ENCODE measurements at regions of chr7 and their contacts with region 1.

Region 1: DNA sequence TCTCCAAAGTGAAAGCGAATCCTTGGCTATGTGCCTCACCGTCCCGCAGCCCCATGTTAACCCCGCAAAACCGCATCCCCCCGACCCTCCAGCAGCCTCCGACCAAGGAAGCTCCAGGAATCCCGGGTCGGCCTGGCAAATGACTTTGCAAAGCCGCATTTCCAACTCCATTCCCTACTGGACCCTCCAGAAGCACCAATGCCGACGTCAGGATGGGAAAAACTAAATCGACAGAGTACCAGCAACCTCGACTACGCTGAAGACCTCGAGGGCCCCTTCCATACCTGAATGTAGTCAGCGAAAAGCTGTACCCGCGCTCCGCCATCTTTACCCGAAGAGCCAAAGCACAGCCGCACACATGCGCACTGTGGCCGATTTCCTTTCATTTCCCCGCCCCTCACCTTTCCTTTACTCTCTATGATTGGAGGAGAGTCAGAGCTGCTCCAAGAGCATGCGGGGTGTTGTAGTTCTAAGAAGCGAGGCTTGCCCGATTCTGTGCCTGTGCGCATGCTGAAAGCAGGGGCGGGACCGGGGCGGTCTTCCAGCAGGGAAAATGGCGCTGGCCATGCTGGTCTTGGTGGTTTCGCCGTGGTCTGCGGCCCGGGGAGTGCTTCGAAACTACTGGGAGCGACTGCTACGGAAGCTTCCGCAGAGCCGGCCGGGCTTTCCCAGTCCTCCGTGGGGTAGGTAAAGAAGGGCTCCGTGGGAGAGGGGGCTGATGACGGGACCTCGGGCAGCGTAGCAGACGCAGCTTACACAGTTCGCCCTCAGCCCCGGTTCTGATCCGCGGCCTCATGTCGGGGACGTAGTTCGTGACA is at the starts of genes MRPL32 and PSMA2:
- DNase-seq: peak; percentile 97
- H3K4me3 Mint-ChIP-seq: peak within 1 kb of the TSS; percentile 99
- H3K27ac Mint-ChIP-seq: peak within 1 kb of the TSS; percentile 91
- H3K4me1 Mint-ChIP-seq: peaks cover 69% of the 10 kb centered on the region
- H3K27me3 Mint-ChIP-seq: no peaks in the 10 kb centered on the region
- total RNA-seq, gene MRPL32: 81.5 and 82.0 TPM in 2 replicates
- total RNA-seq, gene PSMA2: 187 and 194 TPM in 2 replicates

Region 2: GRCh38 chr7:42869131-42870020 is 62.7 kb before region 1 on chr7:
- intact Hi-C with region 1: loop called (anchors 1 kb)
- DNase-seq: peak; percentile 19
- H3K4me3 Mint-ChIP-seq: peak overlapping the region; percentile 19
- H3K27ac Mint-ChIP-seq: peak overlapping the region; percentile 88
- H3K4me1 Mint-ChIP-seq: peaks cover 24% of the 10 kb centered on the region
- H3K27me3 Mint-ChIP-seq: peaks cover 2% of the 10 kb centered on the region

Region 3: GRCh38 chr7:42911454-42912447 is 20.3 kb before region 1 on chr7 and contains the start of gene C7orf25:
- intact Hi-C with region 1: loop called (anchors 1 kb)
- DNase-seq: peak; percentile 93
- H3K4me3 Mint-ChIP-seq: peak within 1 kb of the TSS; percentile 90
- H3K27ac Mint-ChIP-seq: peak within 1 kb of the TSS; percentile 80
- H3K4me1 Mint-ChIP-seq: peaks cover 86% of the 10 kb centered on the region
- H3K27me3 Mint-ChIP-seq: no peaks in the 10 kb centered on the region
- total RNA-seq, gene C7orf25: 5.7 and 6.1 TPM in 2 replicates

Region 4: GRCh38 chr7:43582503-43583423 is 650.7 kb after region 1 on chr7 and contains the start of gene STK17A:
- intact Hi-C with region 1: loop called (anchors 2 kb)
- DNase-seq: peak; percentile 93
- H3K4me3 Mint-ChIP-seq: peak within 1 kb of the TSS; percentile 96
- H3K27ac Mint-ChIP-seq: peak within 1 kb of the TSS; percentile 96
- H3K4me1 Mint-ChIP-seq: peaks cover 36% of the 10 kb centered on the region
- H3K27me3 Mint-ChIP-seq: peaks cover 21% of the 10 kb centered on the region
- total RNA-seq, gene STK17A: 44.8 and 47.8 TPM in 2 replicates

Region 5: DNA sequence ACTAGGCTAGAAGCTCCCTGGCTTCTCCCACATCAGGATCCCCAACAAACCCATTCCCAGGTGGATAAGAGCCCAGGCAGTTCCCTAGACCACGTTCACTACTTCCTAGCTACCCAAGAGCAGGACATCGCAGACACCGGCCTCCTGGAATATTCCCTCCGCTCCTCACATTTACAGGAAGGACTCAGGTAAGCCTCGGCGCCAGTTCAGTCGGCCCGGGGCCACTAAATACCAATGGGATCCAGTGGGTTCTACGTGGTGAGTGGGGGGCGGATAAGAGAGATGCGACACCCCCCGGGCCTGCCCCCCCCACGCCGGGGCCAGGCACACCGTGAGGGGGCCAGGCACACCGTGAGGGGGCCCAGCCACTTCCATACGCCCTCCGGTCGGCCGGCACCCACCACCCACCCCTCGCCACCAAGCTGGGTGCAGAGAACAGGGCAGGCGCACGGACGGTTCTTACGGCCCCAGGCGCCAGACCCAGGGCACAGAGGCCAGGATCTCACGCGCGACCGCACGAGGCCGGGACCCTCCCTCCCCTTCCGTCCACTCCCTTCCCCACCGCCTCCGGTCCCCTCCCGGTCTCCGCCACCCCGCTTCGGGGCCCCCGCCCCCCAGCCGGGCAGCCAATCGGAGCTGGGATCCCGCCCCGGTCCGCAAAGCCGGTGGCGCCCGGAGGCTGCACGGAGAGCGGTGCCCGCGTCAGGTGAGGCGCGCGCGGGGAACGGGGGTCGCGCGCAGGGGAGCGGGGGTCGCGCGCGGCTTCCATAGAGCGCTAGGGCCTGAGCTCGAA is 826.2 kb after region 1 on chr7 and contains the start of gene BLVRA:
- intact Hi-C with region 1: loop called (anchors 1 kb)
- DNase-seq: peak; percentile 76
- H3K4me3 Mint-ChIP-seq: peak within 1 kb of the TSS; percentile 88
- H3K27ac Mint-ChIP-seq: peak within 1 kb of the TSS; percentile 49
- H3K4me1 Mint-ChIP-seq: peaks cover 34% of the 10 kb centered on the region
- H3K27me3 Mint-ChIP-seq: peaks cover 3% of the 10 kb centered on the region
- total RNA-seq, gene BLVRA: 48.1 and 52.9 TPM in 2 replicates

Region 6: DNA sequence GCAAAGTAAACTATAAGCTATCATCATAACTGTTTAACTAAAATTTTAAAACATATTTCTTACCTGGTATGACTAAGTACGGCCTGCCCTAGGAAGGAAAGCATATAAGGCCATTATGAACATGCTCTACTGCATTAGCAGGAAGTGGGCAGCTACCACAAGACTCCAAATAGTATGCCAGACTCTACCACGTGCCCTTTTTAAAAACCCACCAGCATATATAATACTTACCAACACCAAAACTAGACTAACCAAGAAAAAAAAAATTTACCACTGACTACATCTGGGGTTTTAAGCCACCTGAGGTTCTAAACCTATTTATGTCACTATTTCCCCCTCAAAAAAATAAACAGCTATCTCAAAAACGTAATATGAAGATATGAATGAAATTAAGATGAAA is 1528.3 kb after region 1 on chr7:
- intact Hi-C with region 1: loop called (anchors 10 kb)
- DNase-seq: peak; percentile 57
- H3K4me3 Mint-ChIP-seq: peak overlapping the region; percentile 40
- H3K27ac Mint-ChIP-seq: peak overlapping the region; percentile 76
- H3K4me1 Mint-ChIP-seq: peaks cover 59% of the 10 kb centered on the region
- H3K27me3 Mint-ChIP-seq: no peaks in the 10 kb centered on the region

Measured in activated T-helper 1 cell treated with anti-CD3 and anti-CD28 coated beads, Interleukin-12 subunit alpha, Interleukin-12 subunit beta, Interleukin-2, Interleukin-4 antibody, amounts not matched to agents 30 ng/mL and 10 ng/mL and 1 ng/mL, durations not matched to agents 14 hours and 24 hours and 36 hours (primary cell).